ENCODE measurements at regions of chr12 and their contacts with region 1.

Region 1: DNA sequence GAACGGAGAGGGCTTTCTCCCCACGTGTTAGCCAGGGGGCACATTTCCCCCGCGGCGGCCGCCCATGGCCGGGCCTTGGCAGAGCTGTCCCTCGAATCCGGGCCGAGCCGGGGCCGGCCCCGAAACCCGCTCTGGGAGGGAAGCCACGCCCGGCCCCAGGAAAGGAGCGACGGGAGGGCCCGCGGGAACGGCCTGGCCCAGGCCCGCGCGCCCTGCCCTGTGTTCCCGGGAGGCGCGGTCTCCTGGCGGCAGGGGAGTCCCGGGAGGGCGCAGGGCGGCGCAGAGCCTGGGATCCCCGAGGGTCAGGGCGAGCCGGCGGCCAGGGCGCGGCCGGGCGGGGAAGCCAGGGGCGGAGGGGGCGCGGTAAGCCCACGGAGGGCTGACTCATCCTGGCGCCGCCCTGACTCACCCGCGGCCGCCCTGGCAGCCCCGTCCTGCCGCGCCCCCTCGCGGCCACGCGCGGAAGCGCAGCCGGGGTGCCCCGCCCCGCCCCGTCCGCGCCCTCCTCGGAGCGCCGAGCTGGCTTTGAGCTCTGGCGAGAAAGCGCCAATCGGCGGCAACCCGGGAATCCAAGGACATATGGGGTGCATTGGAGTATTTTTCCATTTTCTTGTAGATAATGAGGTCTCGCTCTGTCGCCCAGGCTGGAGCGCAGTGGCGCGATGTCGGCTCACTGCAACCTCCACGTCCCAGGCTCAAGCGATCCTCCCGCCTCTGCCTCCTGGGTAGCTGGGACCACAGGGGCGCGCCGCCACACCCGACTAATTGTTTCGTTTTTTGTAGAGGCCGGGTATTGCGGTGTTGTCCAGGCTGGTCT is 31.8 kb upstream of the PLEKHG6 start:
- DNase-seq: peak; percentile 83
- H3K4me3 ChIP-seq: peak overlapping the region in 2 of 3 experiments; percentile 29 to 39
- H3K27ac ChIP-seq: peak overlapping the region; percentile 68
- H3K4me1 ChIP-seq: peaks cover 40% of the 10 kb centered on the region
- H3K27me3 ChIP-seq: no peaks in the 10 kb centered on the region
- CTCF ChIP-seq: peak; percentile 50 to 95
- POLR2A ChIP-seq: peak; percentile 57

Region 2: GRCh38 chr12:6062757-6063735 is 215.6 kb before region 1 on chr12:
- CTCF ChIA-PET with region 1: interaction called, 18 read pairs
- POLR2A ChIA-PET with region 1: no interaction called
- dilution Hi-C with region 1: no loop called
- intact Hi-C with region 1: loop called (anchors 2 kb)
- DNase-seq: no peak
- H3K4me3 ChIP-seq: no peak overlapping the region
- H3K27ac ChIP-seq: no peak overlapping the region
- H3K4me1 ChIP-seq: peaks cover 14% of the 10 kb centered on the region
- H3K27me3 ChIP-seq: no peaks in the 10 kb centered on the region
- CTCF ChIP-seq: peak; percentile 61 to 83
- POLR2A ChIP-seq: peak; percentile 42

Region 3: DNA sequence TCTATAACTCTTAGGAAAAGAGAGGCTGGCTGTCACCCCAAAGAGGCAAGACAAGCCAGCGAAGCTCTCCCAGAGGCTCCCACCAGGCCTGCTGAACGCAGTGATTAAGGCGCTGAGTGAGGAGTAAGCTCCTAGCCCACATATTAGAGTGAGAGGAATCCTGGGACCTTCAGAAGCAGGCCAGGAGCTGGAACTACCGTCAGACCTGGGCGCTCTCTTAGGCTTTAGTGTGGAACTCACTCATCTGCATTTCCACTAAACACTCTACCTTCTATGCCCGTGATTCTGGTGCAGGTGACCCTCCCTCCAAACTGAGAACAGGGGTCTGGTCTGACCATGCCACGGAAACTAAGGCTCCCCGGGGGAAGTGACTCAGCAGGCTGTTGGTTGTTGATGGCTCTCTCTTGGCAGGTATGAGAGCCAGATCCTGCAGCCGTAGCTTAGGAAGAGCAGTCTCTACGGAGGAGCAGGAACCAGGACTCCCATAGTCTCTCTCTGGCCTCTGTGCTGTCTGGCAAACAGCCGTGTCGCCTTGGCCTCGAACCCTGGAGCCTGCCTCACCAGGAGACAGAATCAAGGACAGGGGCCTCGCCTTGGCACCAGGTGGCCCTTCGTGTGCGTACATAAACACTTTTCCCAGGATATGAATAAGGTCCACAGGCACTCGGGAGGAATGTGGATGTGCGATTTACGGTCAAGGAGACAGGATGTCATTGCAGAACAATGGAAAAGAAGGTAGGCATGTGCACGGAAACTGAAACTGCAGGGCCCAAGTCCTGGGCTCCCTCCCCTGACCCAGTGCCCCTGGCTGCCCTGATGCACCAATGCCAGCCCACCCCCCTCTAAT is 162.2 kb before region 1 on chr12:
- CTCF ChIA-PET with region 1: interaction called, 5 read pairs
- POLR2A ChIA-PET with region 1: interaction called, 3 read pairs
- dilution Hi-C with region 1: no loop called
- intact Hi-C with region 1: loop called (anchors 1 kb)
- DNase-seq: peak; percentile 95
- H3K4me3 ChIP-seq: peak overlapping the region in 1 of 3 experiments; percentile 0
- H3K27ac ChIP-seq: peak overlapping the region; percentile 100
- H3K4me1 ChIP-seq: peaks cover 91% of the 10 kb centered on the region
- H3K27me3 ChIP-seq: no peaks in the 10 kb centered on the region
- CTCF ChIP-seq: no peak
- POLR2A ChIP-seq: peak; percentile 77

Region 4: DNA sequence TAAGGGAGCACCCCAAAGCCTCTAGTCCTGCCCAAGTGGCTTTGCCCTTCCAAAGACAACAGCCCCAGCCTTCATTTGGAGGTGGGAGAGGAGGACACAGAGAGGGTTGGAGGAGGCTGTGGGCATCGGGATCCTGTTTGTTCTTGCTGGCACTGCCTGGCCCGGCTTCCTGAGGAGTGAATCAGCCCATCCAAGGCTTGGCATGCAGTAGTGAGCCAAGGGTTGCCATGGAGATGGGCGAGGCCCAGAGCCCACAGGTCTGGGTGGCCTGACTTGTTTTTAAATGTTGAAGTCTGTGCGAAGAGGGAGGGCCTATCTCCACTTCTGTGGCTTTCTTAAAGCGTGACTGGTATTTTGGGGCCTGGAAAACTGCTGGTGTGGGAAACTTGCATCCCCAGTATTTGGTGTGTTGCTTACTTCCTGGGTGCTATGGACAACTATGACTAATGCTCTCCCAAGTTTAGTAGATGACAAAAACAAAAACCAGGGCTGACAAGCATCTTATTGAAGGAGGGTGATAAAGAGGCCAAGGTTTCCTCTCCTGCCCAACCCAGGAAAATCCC is 62.6 kb before region 1 on chr12:
- CTCF ChIA-PET with region 1: interaction called, 28 read pairs
- POLR2A ChIA-PET with region 1: no interaction called
- dilution Hi-C with region 1: no loop called
- intact Hi-C with region 1: no loop called
- DNase-seq: peak; percentile 92
- H3K4me3 ChIP-seq: no peak overlapping the region
- H3K27ac ChIP-seq: peak overlapping the region; percentile 68
- H3K4me1 ChIP-seq: peaks cover 69% of the 10 kb centered on the region
- H3K27me3 ChIP-seq: no peaks in the 10 kb centered on the region
- CTCF ChIP-seq: no peak
- POLR2A ChIP-seq: no peak

Region 5: GRCh38 chr12:6241495-6241894 is 37.2 kb before region 1 on chr12:
- CTCF ChIA-PET with region 1: interaction called, 10 read pairs
- POLR2A ChIA-PET with region 1: no interaction called
- dilution Hi-C with region 1: no loop called
- intact Hi-C with region 1: no loop called
- DNase-seq: peak; percentile 74
- H3K4me3 ChIP-seq: no peak overlapping the region
- H3K27ac ChIP-seq: no peak overlapping the region
- H3K4me1 ChIP-seq: peaks cover 9% of the 10 kb centered on the region
- H3K27me3 ChIP-seq: no peaks in the 10 kb centered on the region
- CTCF ChIP-seq: no peak
- POLR2A ChIP-seq: no peak

Region 6: GRCh38 chr12:6450869-6451347 is 172.3 kb after region 1 on chr12:
- CTCF ChIA-PET with region 1: no interaction called
- POLR2A ChIA-PET with region 1: no interaction called
- dilution Hi-C with region 1: no loop called
- intact Hi-C with region 1: no loop called
- DNase-seq: no peak
- H3K4me3 ChIP-seq: peak overlapping the region in 2 of 3 experiments; percentile 10 to 51
- H3K27ac ChIP-seq: peak overlapping the region; percentile 62
- H3K4me1 ChIP-seq: peaks cover 27% of the 10 kb centered on the region
- H3K27me3 ChIP-seq: no peaks in the 10 kb centered on the region
- CTCF ChIP-seq: no peak
- POLR2A ChIP-seq: no peak